Mammary epithelial cell (primary cell): ENCODE measurements at regions of chr17 and their contacts with region 1.

Region 1: GRCh38 chr17:43871951-43872695 is 25.1 kb downstream of the CD300LG start:
- DNase-seq: peak; percentile 50
- H3K4me3 ChIP-seq: peak overlapping the region; percentile 25 to 43 (median 29)
- H3K27ac ChIP-seq: no peak overlapping the region
- H3K4me1 ChIP-seq: peaks cover 8% of the 10 kb centered on the region
- H3K27me3 ChIP-seq: no peaks in the 10 kb centered on the region
- CTCF ChIP-seq: no peak

Region 2: DNA sequence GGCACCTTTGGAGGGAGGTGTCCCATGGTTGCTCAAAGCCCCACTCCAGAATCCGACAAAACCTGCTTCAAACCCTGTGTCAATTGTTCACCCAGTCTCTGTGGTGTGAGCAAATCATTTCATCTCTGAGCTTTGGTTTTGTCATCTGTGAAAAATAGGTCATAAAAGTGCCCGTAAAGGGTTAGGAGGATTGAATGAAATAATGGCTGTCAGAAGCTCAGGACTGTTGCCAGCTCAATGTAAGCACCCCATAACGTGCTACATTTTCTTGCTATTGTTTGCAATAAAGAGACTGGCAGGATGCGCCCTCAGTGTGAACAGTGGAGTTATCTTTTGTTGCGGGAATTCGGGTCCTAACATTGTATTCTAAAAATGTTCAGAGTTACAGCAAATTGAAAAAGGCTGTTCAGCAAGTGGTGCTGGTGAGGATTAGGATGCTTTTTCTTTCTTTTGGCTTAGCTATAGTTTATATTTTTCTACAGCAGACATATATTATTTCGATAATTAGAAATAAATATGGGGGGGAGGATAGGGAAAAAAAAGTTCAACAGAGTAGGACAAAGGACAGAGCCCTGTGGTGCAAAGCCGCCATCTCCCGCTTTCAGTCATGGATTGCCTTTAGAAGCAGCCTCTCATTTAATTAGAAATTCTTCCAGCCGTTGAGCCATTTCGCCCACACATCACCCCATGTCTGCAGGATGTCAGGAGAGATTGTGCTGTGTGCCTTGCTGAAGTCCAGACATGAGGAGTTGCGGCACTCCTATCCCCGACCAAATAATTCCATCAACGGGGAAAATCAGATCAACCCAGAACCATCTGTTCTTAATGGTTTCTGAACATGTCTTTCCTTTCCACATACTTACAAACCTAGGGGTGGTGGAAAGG is 102.5 kb after region 1 on chr17:
- CTCF ChIA-PET with region 1: no interaction called
- dilution Hi-C with region 1: no loop called
- in situ Hi-C with region 1: no loop called
- intact Hi-C with region 1: no loop called
- DNase-seq: no peak
- H3K4me3 ChIP-seq: no peak overlapping the region
- H3K27ac ChIP-seq: no peak overlapping the region
- H3K4me1 ChIP-seq: no peaks in the 10 kb centered on the region
- H3K27me3 ChIP-seq: peaks cover 1% of the 10 kb centered on the region
- CTCF ChIP-seq: no peak

Region 3: DNA sequence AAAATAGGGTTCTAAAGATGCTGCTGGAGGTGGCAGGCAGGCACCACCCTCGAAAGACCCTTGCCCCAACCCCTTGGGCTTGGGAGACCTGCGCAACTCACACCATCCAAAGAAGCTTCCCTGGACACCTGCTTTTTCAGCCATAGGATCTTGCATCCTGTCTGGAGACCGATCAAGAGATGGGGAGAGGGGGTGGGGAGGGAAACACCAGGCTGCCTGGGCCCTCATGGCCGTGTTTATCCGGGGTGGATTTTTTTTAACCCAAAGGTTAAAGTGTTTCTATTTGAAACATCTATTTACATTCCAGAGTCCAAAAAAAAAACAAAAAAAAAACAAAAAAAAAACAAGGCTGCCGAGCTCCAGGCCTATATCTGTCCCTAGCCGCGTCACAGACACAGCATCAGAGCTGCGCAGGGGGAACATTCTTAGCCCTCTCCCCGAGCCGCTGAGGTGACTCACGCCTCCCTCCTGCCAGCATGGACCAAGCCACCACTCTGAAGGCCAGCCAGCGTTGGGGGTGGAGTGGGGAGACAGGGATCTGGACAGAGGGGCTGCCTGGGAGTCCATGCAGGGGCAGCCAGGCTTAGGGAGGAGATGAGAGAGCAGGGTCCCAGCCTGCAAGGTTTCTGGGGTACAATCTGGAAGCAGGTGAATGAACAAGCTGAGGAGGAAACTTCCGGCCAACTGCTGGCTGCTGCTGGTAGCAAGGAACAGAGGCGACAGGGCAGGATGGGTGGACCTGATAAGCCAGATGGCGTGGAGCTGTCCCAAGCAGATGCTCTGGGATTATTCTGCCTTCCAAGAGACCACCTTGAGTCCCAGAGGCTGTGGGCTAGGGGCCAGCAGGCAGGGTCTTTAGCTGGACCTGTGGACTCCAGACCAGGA is 236.6 kb after region 1 on chr17:
- CTCF ChIA-PET with region 1: no interaction called
- dilution Hi-C with region 1: loop called (anchors 5 kb)
- in situ Hi-C with region 1: no loop called
- intact Hi-C with region 1: no loop called
- DNase-seq: no peak
- H3K4me3 ChIP-seq: no peak overlapping the region
- H3K27ac ChIP-seq: no peak overlapping the region
- H3K4me1 ChIP-seq: peaks cover 11% of the 10 kb centered on the region
- H3K27me3 ChIP-seq: no peaks in the 10 kb centered on the region
- CTCF ChIP-seq: no peak